Mucosa of descending colon (tissue), 3 donors: ENCODE measurements at regions of chr16 and their contacts with region 1.

Region 1: GRCh38 chr16:2447920-2448583 is 11.9 kb upstream of the TEDC2 start:
- DNase-seq: no peak
- ATAC-seq: no peak
- H3K4me3 ChIP-seq: no peak overlapping the region
- H3K4me1 ChIP-seq: no peaks in the 10 kb centered on the region
- CTCF ChIP-seq: no peak

Region 2: GRCh38 chr16:2398520-2398919 is 49.5 kb before region 1 on chr16:
- intact Hi-C with region 1: loop called in 1 of 2 experiments (anchors 10 kb)
- DNase-seq: no peak
- ATAC-seq: no peak
- H3K4me3 ChIP-seq: no peak overlapping the region
- H3K4me1 ChIP-seq: no peaks in the 10 kb centered on the region
- CTCF ChIP-seq: no peak

Region 3: GRCh38 chr16:2422123-2422867 is 25.8 kb before region 1 on chr16:
- intact Hi-C with region 1: no loop called
- DNase-seq: no peak
- ATAC-seq: no peak
- H3K4me3 ChIP-seq: no peak overlapping the region
- H3K4me1 ChIP-seq: no peaks in the 10 kb centered on the region
- CTCF ChIP-seq: no peak

Region 4: DNA sequence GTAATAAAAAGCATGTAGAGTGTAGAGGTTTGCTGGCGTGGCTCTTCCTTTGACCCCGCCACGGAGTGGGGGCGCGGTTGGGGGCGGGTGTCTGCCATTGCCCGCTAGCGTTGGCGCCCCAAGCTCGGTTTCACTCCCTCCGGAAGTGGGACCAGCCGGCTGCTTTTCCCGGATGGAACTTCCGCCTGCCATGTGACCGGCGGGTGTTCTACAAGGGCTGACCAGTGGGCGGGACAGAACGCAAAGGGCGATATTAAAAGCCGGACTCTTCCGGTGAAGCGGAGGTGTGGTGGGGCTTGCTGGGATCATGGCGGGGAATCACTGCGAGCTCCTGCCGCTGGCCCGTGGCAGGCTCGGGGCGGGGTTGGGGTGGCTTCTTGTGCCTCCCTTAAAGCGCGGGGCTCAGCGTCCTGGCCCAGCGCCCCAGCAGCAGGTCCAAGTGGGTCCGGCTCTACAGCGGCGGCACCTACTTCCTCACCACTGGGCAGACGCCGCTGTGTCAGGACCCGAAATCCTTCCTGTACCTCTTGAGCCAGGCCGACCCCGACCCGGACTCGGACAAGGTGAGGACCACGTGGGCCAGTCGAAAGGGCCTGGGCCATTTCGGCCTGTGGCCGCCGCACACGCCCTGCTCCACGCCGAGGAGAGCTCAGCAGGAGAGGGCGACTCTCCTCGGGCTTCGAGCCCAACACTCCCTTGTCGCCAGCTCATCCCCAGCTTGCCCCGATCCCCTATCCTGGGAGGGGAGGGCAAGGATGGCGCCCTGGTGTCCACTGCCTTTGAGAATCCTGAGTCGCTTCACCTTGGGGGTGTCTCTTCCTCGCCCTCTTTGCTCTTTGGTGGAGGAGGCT is 155.3 kb after region 1 on chr16:
- intact Hi-C with region 1: no loop called
- DNase-seq: peak; percentile 95 to 97 (median 96)
- ATAC-seq: peak; percentile 94
- H3K4me3 ChIP-seq: peak overlapping the region; percentile 97
- H3K4me1 ChIP-seq: peaks cover 6% of the 10 kb centered on the region
- CTCF ChIP-seq: no peak